CD8-positive, alpha-beta T cell (primary cell): ENCODE measurements at regions of chr17 and their contacts with region 1.

Region 1: GRCh38 chr17:75515496-75516254 is at the start of gene CASKIN2:
- DNase-seq: peak; percentile 56 to 89 (median 80)
- ATAC-seq: peak; percentile 59
- H3K4me3 ChIP-seq: peak within 1 kb of the TSS; percentile 79 to 97
- H3K4me3 Mint-ChIP-seq: peak within 1 kb of the TSS; percentile 77
- H3K27ac ChIP-seq: peak within 1 kb of the TSS in 1 of 2 experiments; percentile 32
- H3K27ac Mint-ChIP-seq: no peak within 1 kb of the TSS
- H3K4me1 ChIP-seq: peaks cover 35% of the 10 kb centered on the region
- H3K4me1 Mint-ChIP-seq: peaks cover 26% of the 10 kb centered on the region
- H3K27me3 ChIP-seq: no peaks in the 10 kb centered on the region
- H3K27me3 Mint-ChIP-seq: no peaks in the 10 kb centered on the region
- CTCF ChIP-seq: peak; percentile 99
- total RNA-seq, gene CASKIN2: 0.64 to 0.98 TPM

Region 2: DNA sequence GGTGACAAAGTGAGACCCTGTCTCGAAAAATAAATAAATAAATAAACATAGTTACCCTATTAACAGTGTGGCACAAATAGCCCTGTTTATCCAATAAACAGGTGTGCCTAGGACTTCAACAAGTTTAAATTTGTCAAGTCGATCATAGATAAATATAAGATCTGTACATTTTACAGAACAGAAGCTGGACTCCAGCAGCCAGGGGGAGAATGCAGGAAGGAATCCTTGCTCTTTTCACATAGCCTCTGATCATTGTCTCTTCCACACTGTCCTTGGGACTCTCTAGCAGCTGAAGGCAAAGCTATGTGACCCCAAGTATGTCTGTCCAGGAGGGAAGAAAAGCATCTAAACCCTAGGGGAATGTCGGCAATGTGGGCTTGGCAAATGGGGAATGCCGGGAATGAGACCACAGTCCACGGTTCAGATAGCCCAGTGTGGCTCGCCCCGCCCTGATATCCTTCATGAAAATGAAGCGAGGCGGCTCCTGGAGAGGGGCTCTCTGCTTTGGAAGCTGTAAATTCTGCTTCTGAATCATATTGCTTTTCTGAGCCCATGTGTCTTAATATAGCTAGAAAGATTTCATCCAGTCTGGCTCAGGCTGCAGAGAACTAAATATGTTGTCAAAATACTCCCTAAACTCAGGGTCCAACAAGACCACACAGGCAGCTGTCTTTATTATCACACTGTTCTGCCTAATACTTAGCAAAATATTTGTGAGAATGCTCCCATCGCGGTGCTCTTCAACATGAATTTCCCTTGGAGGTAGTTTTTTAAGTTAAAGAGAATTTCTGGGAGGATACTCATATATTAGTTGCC is 85.3 kb before region 1 on chr17:
- CTCF ChIA-PET with region 1: interaction called, 5 read pairs
- POLR2A ChIA-PET with region 1: no interaction called
- intact Hi-C with region 1: loop called (anchors 1 kb)
- DNase-seq: no peak
- ATAC-seq: no peak
- H3K4me3 ChIP-seq: no peak overlapping the region
- H3K4me3 Mint-ChIP-seq: no peak overlapping the region
- H3K27ac ChIP-seq: no peak overlapping the region
- H3K27ac Mint-ChIP-seq: no peak overlapping the region
- H3K4me1 ChIP-seq: peaks cover 6% of the 10 kb centered on the region
- H3K4me1 Mint-ChIP-seq: peaks cover 11% of the 10 kb centered on the region
- H3K27me3 ChIP-seq: no peaks in the 10 kb centered on the region
- H3K27me3 Mint-ChIP-seq: peaks cover 5% of the 10 kb centered on the region
- CTCF ChIP-seq: no peak

Region 3: GRCh38 chr17:75504347-75504964 is 11.2 kb before region 1 on chr17:
- CTCF ChIA-PET with region 1: interaction called, 5 read pairs
- POLR2A ChIA-PET with region 1: no interaction called
- intact Hi-C with region 1: loop called in 1 of 2 experiments (anchors 1 kb)
- DNase-seq: peak in 6 of 9 experiments; percentile 48 to 70 (median 58)
- ATAC-seq: peak; percentile 71
- H3K4me3 ChIP-seq: no peak overlapping the region
- H3K4me3 Mint-ChIP-seq: no peak overlapping the region
- H3K27ac ChIP-seq: no peak overlapping the region
- H3K27ac Mint-ChIP-seq: no peak overlapping the region
- H3K4me1 ChIP-seq: peaks cover 6% of the 10 kb centered on the region
- H3K4me1 Mint-ChIP-seq: no peaks in the 10 kb centered on the region
- H3K27me3 ChIP-seq: no peaks in the 10 kb centered on the region
- H3K27me3 Mint-ChIP-seq: no peaks in the 10 kb centered on the region
- CTCF ChIP-seq: peak; percentile 50

Region 4: DNA sequence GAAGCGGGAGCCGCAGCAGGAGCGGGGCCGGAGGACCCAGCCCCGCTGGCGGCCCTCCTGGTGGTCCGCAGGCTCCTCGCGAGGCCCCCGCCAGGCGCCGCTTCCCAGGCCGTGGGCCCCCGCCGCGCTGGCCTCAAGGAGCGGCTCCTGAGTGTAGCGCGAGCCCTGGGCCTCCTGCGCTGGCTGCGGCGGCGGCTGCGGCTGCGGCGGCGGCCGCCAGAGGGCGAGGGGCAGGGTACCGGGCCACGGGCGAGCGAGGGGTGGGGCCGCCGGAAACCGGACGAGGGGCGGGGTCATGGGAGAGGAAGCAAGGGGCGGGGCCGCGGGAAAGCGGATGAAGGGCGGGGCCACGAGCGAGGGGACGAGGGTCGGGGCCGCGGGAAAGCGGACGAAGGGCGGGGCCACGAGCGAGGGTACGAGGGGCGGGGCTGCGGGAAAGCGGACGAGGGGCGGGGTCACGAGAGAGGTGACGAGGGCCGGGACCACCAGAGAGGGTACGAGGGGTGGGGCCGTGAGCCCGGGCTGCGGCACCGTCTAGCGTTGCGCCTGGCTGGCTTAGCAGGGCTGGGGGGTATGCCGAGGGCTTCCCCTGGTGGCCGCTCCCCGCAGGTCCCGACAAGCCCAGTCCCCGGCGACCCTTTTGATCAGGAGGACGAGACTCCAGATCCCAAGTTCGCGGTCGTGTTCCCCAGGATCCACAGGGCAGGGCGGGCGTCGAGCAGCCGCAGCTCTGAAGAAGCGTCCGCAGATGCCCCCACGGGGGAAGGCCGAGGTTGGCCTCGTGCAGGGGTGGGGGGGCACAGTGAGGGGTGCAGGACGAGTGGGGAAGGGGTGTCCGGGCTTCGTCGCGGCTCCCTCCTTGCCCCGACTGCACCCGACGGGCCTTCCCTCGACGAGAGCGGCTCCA is 73.6 kb after region 1 on chr17:
- CTCF ChIA-PET with region 1: interaction called, 6 read pairs
- POLR2A ChIA-PET with region 1: interaction called, 8 read pairs
- intact Hi-C with region 1: loop called (anchors 1 kb)
- DNase-seq: peak; percentile 90 to 99 (median 95)
- ATAC-seq: peak; percentile 85
- H3K4me3 ChIP-seq: peak overlapping the region; percentile 59 to 74
- H3K4me3 Mint-ChIP-seq: peak overlapping the region; percentile 77
- H3K27ac ChIP-seq: peak overlapping the region; percentile 48 to 52
- H3K27ac Mint-ChIP-seq: peak overlapping the region; percentile 70
- H3K4me1 ChIP-seq: peaks cover 15% of the 10 kb centered on the region
- H3K4me1 Mint-ChIP-seq: peaks cover 15% of the 10 kb centered on the region
- H3K27me3 ChIP-seq: no peaks in the 10 kb centered on the region
- H3K27me3 Mint-ChIP-seq: no peaks in the 10 kb centered on the region
- CTCF ChIP-seq: peak; percentile 61